Cardiac septum (tissue), 1 donor: ENCODE measurements at regions of chr1 and their contacts with region 1.

Region 1: DNA sequence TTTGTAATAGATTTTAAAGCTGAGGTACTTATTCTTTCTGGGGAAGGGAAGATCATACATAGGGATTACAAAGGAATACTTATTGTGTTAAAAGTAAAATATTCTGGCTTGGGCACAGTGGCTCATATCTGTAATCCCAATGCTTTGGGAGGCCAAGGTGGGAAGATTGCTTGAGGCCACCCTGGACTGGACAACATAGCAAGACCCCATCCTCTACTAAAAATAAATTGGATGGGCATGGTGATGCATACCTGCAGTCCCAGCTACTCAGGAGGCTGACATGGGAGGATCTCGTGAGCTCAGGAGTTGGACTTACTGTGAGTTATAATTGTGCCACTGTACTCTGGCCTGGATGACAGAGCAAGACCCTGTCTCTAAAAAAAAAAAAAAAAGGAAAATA is 27.6 kb downstream of the GABPB2 start:
- DNase-seq: no peak

Region 2: DNA sequence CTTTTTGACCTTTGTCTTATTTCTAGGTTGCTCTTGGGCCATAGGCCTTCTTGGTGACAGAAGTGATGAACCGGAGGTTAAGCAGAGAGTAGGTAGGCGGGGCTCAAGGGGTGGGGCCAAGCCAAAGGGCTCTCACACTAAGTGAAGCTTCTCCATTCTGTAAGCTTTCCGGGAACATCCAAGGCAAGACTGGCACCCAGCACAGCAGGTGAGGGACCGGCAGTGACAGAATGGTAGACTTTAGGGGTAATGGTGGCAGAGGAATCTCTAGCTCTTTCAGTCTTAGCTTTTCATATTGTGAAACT is 58.3 kb after region 1 on chr1 and contains the start of gene TNFAIP8L2:
- intact Hi-C with region 1: loop called (anchors 2 kb)
- DNase-seq: peak; percentile 89
- total RNA-seq, gene TNFAIP8L2: 0.86 TPM